ENCODE measurements at regions of chr12 and their contacts with region 1.

Region 1: GRCh38 chr12:55738123-55739024 is 4.5 kb upstream of the GDF11 start:
- DNase-seq: peak; percentile 65
- ATAC-seq: peak; percentile 87
- H3K4me3 Mint-ChIP-seq: peak overlapping the region; percentile 92
- H3K27ac Mint-ChIP-seq: peak overlapping the region; percentile 91
- H3K4me1 Mint-ChIP-seq: peaks cover 27% of the 10 kb centered on the region
- H3K27me3 Mint-ChIP-seq: no peaks in the 10 kb centered on the region
- CTCF ChIP-seq: peak; percentile 73

Region 2: DNA sequence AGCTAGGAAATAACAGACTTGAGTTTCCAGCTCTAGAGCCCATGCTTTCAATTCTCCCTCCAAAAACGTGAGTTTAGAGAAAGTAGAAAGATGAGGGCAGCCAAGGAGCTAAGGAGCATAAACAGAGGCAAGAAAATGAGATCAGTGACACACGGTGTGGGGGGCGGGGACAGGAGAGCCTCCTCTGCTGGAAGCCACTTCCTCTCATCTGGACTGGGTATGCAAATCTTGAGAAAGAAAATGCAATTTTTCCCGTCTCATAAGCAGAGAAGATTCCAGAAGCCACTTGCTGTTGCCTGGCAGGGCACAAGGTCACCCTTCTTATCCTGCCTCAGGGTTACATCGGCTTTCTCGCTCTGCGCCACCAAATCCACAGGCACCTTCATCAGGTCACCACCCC is 95.7 kb before region 1 on chr12:
- CTCF ChIA-PET with region 1: interaction called, 11 read pairs
- POLR2A ChIA-PET with region 1: no interaction called
- intact Hi-C with region 1: no loop called
- DNase-seq: no peak
- ATAC-seq: no peak
- H3K4me3 Mint-ChIP-seq: peak overlapping the region; percentile 55
- H3K27ac Mint-ChIP-seq: peak overlapping the region; percentile 68
- H3K4me1 Mint-ChIP-seq: peaks cover 40% of the 10 kb centered on the region
- H3K27me3 Mint-ChIP-seq: peaks cover 2% of the 10 kb centered on the region
- CTCF ChIP-seq: no peak

Region 3: DNA sequence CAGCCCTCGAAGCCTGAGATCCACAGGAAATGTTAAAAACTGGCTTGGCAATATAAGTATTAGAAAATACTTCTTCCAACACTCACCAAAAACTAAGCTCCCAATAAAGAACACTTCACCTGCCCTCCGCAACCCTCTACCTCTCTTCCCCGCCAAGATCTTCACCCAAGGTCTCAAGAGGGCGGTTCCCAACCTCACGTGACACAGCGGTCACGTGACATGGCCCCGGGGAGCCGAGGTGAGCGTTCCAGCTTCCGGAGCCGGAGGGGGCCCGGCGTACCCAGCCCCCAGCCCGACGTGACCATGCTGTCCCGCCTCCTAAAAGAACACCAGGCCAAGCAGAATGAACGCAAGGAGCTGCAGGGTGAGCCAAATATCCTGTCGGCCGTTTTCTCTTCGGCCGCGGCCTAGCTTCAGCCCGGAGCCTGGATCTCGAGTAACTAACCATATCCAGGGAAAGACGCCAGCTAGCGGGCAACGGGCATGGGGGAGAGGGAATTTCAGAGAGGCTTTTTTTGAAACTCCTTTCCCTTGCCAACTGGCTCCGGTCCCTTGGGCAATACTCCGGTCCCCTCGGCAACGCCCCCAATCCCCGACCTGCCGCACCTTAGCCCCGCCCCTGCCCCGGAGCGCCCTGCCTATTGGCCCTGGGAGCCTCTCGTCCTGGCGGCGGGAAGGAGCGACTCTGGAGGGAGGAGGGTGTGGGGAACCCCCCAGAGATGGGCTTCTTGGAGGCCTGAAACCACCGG is 22.4 kb before region 1 on chr12 and contains the start of gene BLOC1S1:
- CTCF ChIA-PET with region 1: interaction called, 29 read pairs
- POLR2A ChIA-PET with region 1: interaction called, 4 read pairs
- intact Hi-C with region 1: no loop called
- DNase-seq: peak; percentile 92
- ATAC-seq: peak; percentile 94
- H3K4me3 Mint-ChIP-seq: peak within 1 kb of the TSS; percentile 92
- H3K27ac Mint-ChIP-seq: peak within 1 kb of the TSS; percentile 91
- H3K4me1 Mint-ChIP-seq: peaks cover 34% of the 10 kb centered on the region
- H3K27me3 Mint-ChIP-seq: peaks cover 2% of the 10 kb centered on the region
- CTCF ChIP-seq: no peak
- total RNA-seq, gene BLOC1S1: 91.0 and 104 TPM in 2 replicates

Region 4: DNA sequence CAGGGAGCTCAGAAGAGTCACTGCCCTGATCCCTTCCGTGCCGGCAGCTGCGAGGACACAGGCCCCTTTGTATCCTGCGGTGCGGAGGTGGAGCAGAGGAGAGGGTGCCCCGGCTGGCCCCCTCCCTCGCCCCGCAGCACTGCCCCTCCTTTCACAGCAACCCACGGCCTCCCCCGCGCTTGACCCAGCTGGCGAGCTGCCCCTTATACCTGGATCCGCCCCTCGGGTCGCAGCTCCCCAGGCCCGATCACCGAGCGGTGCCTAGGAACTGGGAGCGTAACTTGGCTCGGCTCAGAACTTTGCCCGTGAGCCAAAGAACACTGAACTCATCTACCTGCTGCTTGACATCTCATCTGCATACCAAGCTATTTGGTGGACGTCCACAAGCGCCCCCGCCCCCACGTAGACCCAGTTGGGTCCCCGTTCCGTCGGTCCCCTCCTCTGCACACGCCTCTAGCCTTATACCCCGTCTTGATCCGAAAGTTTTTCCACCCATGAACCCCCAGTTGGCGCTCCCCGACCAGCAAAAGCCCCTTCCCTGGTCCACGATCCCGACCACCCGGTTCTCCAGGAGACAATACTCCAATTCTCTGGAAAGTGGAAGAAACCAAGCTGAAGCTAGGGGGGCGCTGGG is 91.7 kb after region 1 on chr12:
- CTCF ChIA-PET with region 1: interaction called, 9 read pairs
- POLR2A ChIA-PET with region 1: interaction called, 18 read pairs
- intact Hi-C with region 1: no loop called
- DNase-seq: peak; percentile 32
- ATAC-seq: peak; percentile 13
- H3K4me3 Mint-ChIP-seq: peak overlapping the region; percentile 97
- H3K27ac Mint-ChIP-seq: peak overlapping the region; percentile 91
- H3K4me1 Mint-ChIP-seq: peaks cover 51% of the 10 kb centered on the region
- H3K27me3 Mint-ChIP-seq: no peaks in the 10 kb centered on the region
- CTCF ChIP-seq: no peak

Region 5: GRCh38 chr12:55973598-55974307 is 235.4 kb after region 1 on chr12 and contains the start of gene RAB5B:
- CTCF ChIA-PET with region 1: interaction called, 4 read pairs
- POLR2A ChIA-PET with region 1: interaction called, 13 read pairs
- intact Hi-C with region 1: loop called (anchors 1 kb)
- DNase-seq: peak; percentile 83
- ATAC-seq: peak; percentile 87
- H3K4me3 Mint-ChIP-seq: no peak within 1 kb of the TSS
- H3K27ac Mint-ChIP-seq: no peak within 1 kb of the TSS
- H3K4me1 Mint-ChIP-seq: peaks cover 27% of the 10 kb centered on the region
- H3K27me3 Mint-ChIP-seq: no peaks in the 10 kb centered on the region
- CTCF ChIP-seq: no peak
- total RNA-seq, gene RAB5B: 82.1 and 83.8 TPM in 2 replicates

Region 6: DNA sequence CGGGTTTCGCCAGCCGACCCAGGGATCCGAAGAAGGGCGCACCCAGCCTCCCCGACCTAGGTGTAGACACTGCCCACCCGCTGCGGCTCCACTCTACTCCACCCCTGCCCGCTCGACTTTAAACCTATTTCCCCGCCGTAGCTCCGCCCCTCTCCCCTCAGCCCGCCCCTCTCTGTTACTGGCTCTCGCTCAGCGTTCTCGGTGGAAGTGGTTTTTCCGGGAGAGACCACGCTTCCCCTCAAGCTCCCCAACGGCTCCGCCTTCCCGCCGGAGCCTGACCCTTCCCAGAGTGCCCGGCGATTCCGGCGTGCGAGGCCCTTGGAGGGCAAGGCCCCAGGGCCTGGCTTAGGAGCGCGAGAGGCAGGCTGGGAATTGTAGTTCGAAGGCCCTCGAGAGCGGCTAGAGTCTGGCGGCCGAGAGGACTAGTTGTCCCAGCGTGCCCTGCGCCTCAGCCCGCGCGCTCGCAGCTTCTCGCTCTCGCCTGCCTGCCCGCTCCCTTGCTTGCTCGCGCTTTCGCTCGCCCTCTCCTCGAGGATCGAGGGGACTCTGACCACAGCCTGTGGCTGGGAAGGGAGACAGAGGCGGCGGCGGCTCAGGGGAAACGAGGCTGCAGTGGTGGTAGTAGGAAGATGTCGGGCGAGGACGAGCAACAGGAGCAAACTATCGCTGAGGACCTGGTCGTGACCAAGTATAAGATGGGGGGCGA is 365.9 kb after region 1 on chr12 and contains the start of gene PA2G4:
- CTCF ChIA-PET with region 1: no interaction called
- POLR2A ChIA-PET with region 1: interaction called, 6 read pairs
- intact Hi-C with region 1: loop called (anchors 2 kb)
- DNase-seq: peak; percentile 92
- ATAC-seq: peak; percentile 91
- H3K4me3 Mint-ChIP-seq: peak within 1 kb of the TSS; percentile 98
- H3K27ac Mint-ChIP-seq: peak within 1 kb of the TSS; percentile 93
- H3K4me1 Mint-ChIP-seq: peaks cover 33% of the 10 kb centered on the region
- H3K27me3 Mint-ChIP-seq: no peaks in the 10 kb centered on the region
- CTCF ChIP-seq: no peak
- total RNA-seq, gene PA2G4: 137 and 155 TPM in 2 replicates

Region 7: GRCh38 chr12:56468216-56469006 is 730.0 kb after region 1 on chr12 and contains the start of gene SPRYD4:
- CTCF ChIA-PET with region 1: no interaction called
- POLR2A ChIA-PET with region 1: no interaction called
- intact Hi-C with region 1: loop called (anchors 2 kb)
- DNase-seq: peak; percentile 92
- ATAC-seq: peak; percentile 90
- H3K4me3 Mint-ChIP-seq: peak within 1 kb of the TSS; percentile 94
- H3K27ac Mint-ChIP-seq: peak within 1 kb of the TSS; percentile 94
- H3K4me1 Mint-ChIP-seq: peaks cover 36% of the 10 kb centered on the region
- H3K27me3 Mint-ChIP-seq: no peaks in the 10 kb centered on the region
- CTCF ChIP-seq: no peak
- total RNA-seq, gene SPRYD4: 5.8 and 7.5 TPM in 2 replicates